OCI-LY7 (cell line): ENCODE measurements at regions of chr10 and their contacts with region 1.

Region 1: DNA sequence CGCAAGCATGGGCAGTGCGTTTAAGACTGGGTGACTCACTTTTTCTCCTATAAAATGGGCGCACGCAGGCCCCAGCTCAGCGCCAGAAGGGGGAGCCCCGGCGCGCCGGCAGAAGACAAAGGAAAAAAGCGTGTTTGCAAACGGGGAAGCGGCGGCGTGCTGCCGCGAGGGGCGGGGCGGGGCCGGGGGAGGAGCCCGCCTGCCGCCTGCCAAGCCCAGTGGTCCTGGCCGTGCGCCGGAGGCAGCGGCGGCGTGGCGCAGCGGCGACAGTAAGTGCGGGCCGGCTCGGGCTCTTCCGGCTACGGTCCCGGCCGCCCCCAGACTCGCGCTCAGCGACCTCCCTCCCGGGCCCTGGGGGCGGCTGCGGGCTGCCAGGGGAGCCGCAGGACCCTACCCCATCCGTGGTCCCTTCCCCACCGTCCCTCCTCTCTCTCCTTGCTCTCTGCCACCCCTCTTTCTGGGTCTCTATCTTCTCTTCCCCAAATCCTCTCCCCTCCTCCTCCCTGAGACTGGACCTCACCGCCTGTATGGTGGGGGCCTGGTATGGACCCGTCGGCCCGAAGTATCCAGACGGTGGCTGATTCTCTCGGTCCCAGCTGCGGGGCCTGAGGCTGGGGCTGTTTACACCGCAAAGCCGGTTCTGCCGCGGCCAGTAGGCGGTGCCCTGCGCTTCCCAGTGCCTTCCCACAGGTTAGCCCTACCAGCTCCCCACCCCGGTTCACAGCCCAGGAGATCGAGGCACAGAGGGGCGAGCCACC is at the start of gene SLC29A3:
- DNase-seq: peak; percentile 90
- H3K4me3 ChIP-seq: peak within 1 kb of the TSS; percentile 79
- H3K27ac ChIP-seq: peak within 1 kb of the TSS; percentile 12
- H3K4me1 ChIP-seq: peaks cover 24% of the 10 kb centered on the region
- CTCF ChIP-seq: peak; percentile 79
- total RNA-seq, gene SLC29A3: 1.4 and 1.7 TPM in 2 replicates

Region 2: DNA sequence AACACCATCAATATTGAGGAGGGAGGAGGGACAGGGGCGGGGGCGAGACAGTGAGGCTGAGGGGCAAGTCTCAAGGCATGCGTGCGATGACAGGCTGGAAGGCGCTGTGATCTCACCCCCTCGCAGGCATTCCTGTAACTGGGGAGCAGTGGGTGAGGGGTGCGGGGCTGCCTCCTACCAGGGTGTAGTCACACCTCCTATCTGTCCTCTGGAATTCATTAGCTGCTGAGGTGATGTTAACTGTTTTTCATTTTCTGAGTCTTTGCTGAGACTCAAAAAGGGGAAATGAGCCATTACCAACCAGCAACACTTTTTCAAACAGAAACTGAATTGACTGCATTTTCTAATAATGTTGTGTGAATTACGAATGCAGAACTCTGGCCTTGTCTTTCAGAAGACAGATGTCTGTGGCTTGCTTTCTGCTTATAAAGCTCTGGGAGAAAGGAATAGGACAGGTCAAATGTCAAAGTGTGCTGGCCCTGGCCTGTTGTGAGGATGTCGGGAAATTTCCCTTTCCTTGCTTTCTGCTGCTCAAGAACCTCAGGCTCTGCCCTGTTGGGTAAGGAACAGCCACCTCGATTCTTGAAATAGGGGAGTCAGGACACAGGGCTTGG is 53.8 kb after region 1 on chr10:
- CTCF ChIA-PET with region 1: interaction called, 5 read pairs
- POLR2A ChIA-PET with region 1: interaction called, 7 read pairs
- intact Hi-C with region 1: loop called (anchors 1 kb)
- DNase-seq: peak; percentile 70
- H3K4me3 ChIP-seq: peak overlapping the region; percentile 12
- H3K27ac ChIP-seq: peak overlapping the region; percentile 74
- H3K4me1 ChIP-seq: peaks cover 62% of the 10 kb centered on the region
- CTCF ChIP-seq: no peak

Region 3: GRCh38 chr10:71569775-71570588 is 250.8 kb after region 1 on chr10:
- CTCF ChIA-PET with region 1: interaction called, 4 read pairs
- POLR2A ChIA-PET with region 1: no interaction called
- intact Hi-C with region 1: loop called (anchors 1 kb)
- DNase-seq: peak; percentile 75
- H3K4me3 ChIP-seq: no peak overlapping the region
- H3K27ac ChIP-seq: no peak overlapping the region
- H3K4me1 ChIP-seq: no peaks in the 10 kb centered on the region
- CTCF ChIP-seq: peak; percentile 90

Region 4: DNA sequence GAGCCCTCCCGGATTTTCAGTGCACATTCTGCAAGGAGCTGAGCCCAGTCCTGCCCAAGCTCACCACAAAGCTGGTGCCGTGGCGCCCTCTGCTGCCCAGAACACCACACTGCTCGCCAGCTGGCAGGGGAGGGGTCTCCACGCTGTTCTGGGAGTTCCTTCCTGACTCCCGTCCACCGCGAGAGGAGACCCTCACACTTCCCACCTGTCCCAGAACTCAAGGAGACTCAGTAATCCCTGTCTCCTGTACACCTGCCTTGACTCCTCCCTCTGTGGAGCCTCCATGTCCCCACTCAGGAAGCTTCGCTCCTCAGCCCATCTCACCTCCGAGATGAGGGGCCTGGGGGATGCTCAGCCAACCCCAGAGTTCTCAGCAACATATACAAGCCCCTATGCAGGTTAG is 389.1 kb after region 1 on chr10:
- CTCF ChIA-PET with region 1: interaction called, 6 read pairs
- POLR2A ChIA-PET with region 1: no interaction called
- intact Hi-C with region 1: loop called (anchors 1 kb)
- DNase-seq: peak; percentile 73
- H3K4me3 ChIP-seq: no peak overlapping the region
- H3K27ac ChIP-seq: no peak overlapping the region
- H3K4me1 ChIP-seq: peaks cover 13% of the 10 kb centered on the region
- CTCF ChIP-seq: peak; percentile 98

Region 5: DNA sequence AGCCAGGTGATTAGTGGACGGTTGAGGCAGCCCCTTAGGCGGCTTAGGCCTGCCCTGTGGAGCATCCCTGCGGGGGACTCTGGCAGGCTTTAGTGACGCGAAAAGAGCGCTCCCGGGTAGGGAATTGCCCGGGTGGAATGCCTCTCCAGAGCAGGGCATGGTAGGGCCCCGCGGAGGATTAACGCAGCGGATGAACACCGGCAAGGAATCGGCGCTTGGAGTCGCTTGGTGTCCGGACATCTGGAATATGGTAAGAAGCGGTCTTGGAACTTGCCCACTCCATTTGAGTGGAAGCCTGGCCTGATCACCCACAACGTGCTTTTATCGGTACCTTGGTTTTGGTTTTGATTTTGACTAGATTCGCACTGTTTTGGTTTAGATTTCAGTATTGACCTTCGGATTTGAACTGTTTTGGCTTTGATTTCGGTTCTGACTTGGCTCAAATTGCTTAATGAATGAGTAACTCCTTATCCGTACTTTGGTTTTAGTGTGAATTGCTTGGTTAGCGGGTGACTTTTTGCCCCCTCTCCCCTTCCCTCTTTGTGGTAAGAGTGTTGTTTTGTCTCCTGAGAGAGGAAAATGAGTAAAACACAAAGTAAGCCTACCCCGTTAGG is 620.7 kb after region 1 on chr10:
- CTCF ChIA-PET with region 1: no interaction called
- POLR2A ChIA-PET with region 1: no interaction called
- intact Hi-C with region 1: no loop called
- DNase-seq: no peak
- H3K4me3 ChIP-seq: no peak overlapping the region
- H3K27ac ChIP-seq: no peak overlapping the region
- H3K4me1 ChIP-seq: no peaks in the 10 kb centered on the region
- CTCF ChIP-seq: no peak